CD8-positive, alpha-beta memory T cell (primary cell): ENCODE measurements at regions of chr17 and their contacts with region 1.

Region 1: DNA sequence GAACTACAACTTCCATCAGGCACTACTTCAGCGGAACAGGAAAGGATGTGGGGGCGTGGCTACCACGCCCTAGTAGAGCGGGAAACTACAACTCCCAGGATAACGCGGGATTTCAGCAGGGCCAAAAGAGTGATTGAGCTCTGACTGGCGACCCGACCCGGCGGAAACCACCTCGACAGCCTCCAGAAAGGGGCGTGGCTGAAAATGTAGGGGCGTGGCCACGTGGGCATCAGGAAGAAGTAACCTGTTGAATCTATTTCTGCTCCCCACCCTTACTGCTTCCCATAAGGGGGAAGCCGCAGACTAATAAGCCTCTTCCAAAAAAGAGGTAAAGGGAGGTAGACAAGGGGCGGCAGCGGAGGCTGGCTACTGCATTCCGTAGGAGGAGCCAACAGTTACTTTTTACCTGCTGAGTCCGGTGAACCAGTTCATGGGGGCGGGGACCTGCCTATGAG is at the start of gene TMEM102:
- DNase-seq: peak; percentile 96 to 99 (median 98)
- H3K4me3 ChIP-seq: peak within 1 kb of the TSS; percentile 92
- H3K4me3 Mint-ChIP-seq: peak within 1 kb of the TSS; percentile 88 to 98 (median 96)
- H3K27ac ChIP-seq: peak within 1 kb of the TSS; percentile 77
- H3K27ac Mint-ChIP-seq: peak within 1 kb of the TSS; percentile 93 to 99 (median 97)
- H3K4me1 ChIP-seq: peaks cover 44% of the 10 kb centered on the region
- H3K4me1 Mint-ChIP-seq: peaks cover 30 to 48% (median 42%) of the 10 kb centered on the region in 3 donors
- H3K27me3 ChIP-seq: peaks cover 17% of the 10 kb centered on the region
- H3K27me3 Mint-ChIP-seq: peaks cover 14 to 18% of the 10 kb centered on the region in 2 donors
- total RNA-seq, gene TMEM102: 11.1 to 11.9 TPM

Region 2: DNA sequence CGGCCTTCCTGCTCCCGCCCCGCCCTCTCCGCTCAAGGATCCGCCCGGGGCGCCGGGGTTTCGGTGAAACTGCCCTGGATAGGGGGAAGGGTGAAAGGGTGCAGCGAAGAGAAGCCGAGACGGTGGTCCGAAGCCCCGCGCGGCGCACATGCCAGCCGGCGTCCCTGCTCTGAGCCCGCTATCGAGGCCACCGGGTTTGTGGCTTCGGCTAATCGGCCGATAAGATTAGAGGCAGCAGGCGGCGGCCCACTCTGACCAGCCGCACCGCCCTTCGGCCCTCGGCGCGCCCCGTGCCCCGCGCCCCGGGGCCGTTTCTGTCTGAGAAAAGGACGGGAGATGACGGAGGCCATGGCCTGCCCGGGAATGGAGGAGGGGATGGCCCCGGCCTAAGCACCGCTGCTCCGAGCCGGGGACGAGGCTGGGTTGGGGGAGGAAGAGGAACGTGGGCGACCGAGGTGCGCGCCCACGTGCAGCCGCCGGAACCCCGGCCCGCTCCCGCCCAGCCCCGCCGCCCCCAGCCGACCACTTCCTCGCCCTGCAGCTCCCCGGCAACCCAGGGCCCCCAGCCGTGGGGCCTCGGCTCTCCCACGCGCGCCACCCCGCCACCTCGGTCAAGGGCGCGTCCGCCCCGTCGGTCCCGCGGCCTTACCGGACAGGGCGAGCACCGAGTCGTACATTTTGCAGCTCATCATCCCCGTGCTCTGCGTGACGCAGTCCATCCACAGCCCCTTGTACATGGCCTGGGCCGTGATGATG is 173.9 kb before region 1 on chr17:
- CTCF ChIA-PET with region 1: no interaction called
- POLR2A ChIA-PET with region 1: no interaction called
- DNase-seq: peak in 3 of 5 donors; percentile 25 to 50 (median 33)
- H3K4me3 ChIP-seq: peak overlapping the region; percentile 26
- H3K4me3 Mint-ChIP-seq: peak overlapping the region; percentile 72 to 83 (median 76)
- H3K27ac ChIP-seq: no peak overlapping the region
- H3K27ac Mint-ChIP-seq: peak overlapping the region in 6 of 8 donors; percentile 51 to 85 (median 74)
- H3K4me1 ChIP-seq: peaks cover 19% of the 10 kb centered on the region
- H3K4me1 Mint-ChIP-seq: peaks cover 22 to 32% (median 23%) of the 10 kb centered on the region in 3 donors
- H3K27me3 ChIP-seq: no peaks in the 10 kb centered on the region
- H3K27me3 Mint-ChIP-seq: peaks cover 4 to 6% of the 10 kb centered on the region in 2 donors

Region 3: DNA sequence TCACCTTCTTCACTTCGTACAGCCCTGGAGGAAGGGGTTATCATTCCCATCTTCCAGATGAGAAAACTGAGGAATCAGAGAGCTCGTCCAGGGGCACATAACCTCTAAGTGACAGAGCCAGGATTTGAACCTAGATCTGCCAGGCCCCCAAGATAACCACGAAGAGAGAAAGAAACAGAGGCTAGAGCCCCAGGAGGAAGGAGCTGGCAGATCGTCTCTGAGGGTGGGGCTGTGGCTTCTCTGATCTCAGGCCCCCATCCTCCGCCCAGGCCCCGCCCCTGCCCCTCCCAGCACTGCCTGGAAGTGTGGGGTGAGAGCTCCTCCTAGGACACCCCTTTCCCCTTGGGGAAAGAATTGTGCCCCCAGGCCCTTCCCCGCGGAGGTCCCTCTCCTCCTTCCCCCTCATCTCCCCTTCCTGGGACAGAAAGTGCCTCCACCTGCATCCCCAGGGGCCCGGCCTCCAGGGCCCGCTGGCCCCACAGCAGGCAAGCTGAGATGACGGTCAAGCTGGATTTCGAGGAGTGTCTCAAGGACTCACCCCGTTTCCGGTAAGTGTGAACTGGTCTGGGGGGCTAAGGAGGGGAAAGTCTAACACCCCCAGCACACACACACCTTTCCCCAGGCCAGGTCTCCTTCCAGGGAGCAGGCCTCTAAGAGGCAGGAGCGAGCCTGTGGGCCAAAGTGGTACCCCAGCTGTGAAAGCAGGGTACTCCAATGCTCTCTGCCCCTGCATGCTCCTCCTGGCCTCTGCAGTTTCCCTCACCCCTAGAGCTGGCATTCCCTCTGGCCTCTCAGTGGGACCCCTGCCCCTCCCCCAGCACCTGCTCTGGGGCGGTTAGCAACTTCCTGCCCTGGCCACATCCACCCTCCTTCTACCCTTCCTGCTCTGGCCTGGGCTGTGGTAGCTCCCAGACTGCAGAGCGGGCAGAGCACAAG is 98.7 kb before region 1 on chr17 and contains the start of gene ACAP1:
- CTCF ChIA-PET with region 1: interaction called, 18 read pairs
- POLR2A ChIA-PET with region 1: interaction called, 4 read pairs
- DNase-seq: peak; percentile 78 to 90 (median 81)
- H3K4me3 ChIP-seq: peak within 1 kb of the TSS; percentile 99
- H3K4me3 Mint-ChIP-seq: peak within 1 kb of the TSS; percentile 88 to 98 (median 93)
- H3K27ac ChIP-seq: peak within 1 kb of the TSS; percentile 74
- H3K27ac Mint-ChIP-seq: peak within 1 kb of the TSS; percentile 89 to 98 (median 97)
- H3K4me1 ChIP-seq: peaks cover 69% of the 10 kb centered on the region
- H3K4me1 Mint-ChIP-seq: peaks cover 47 to 68% (median 66%) of the 10 kb centered on the region in 3 donors
- H3K27me3 ChIP-seq: no peaks in the 10 kb centered on the region
- H3K27me3 Mint-ChIP-seq: no peaks in the 10 kb centered on the region
- total RNA-seq, gene ACAP1: 216 to 225 TPM

Region 4: DNA sequence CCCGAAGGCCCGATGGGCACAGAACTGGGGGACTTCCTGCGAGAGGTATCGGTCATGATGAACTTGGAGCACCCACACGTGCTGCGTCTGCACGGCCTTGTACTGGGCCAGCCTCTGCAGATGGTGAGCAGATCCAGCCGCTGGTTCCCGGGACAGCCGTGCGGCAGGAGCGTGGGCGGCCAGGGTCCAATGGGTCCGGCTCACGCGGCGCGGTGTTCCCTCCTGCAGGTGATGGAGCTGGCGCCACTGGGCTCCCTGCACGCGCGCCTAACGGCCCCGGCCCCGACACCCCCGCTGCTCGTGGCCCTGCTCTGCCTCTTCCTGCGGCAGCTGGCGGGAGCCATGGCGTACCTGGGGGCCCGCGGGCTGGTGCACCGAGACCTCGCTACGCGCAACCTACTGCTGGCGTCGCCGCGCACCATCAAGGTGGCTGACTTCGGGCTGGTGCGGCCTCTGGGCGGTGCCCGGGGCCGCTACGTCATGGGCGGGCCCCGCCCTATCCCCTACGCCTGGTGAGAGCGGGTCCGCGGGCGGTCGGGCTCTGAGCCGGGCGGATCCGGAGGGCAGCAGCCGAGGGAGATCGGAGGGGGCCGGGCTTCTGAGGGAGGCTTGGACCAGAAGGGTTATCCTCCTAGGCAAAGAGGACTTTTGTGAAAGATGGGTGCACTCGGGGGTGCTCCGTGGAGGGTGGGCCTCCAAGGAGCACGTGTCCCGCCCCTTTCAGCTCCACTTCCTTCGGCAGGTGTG is 51.3 kb before region 1 on chr17:
- CTCF ChIA-PET with region 1: interaction called, 15 read pairs
- POLR2A ChIA-PET with region 1: interaction called, 6 read pairs
- DNase-seq: peak; percentile 72 to 88 (median 80)
- H3K4me3 ChIP-seq: peak overlapping the region; percentile 83
- H3K4me3 Mint-ChIP-seq: peak overlapping the region; percentile 78 to 92 (median 87)
- H3K27ac ChIP-seq: peak overlapping the region; percentile 79
- H3K27ac Mint-ChIP-seq: peak overlapping the region; percentile 85 to 97 (median 92)
- H3K4me1 ChIP-seq: peaks cover 13% of the 10 kb centered on the region
- H3K4me1 Mint-ChIP-seq: peaks cover 12 to 16% (median 15%) of the 10 kb centered on the region in 3 donors
- H3K27me3 ChIP-seq: peaks cover 16% of the 10 kb centered on the region
- H3K27me3 Mint-ChIP-seq: peaks cover 18 to 33% of the 10 kb centered on the region in 2 donors

Region 5: GRCh38 chr17:7454980-7455379 is 19.7 kb after region 1 on chr17:
- CTCF ChIA-PET with region 1: interaction called, 55 read pairs
- POLR2A ChIA-PET with region 1: interaction called, 10 read pairs
- DNase-seq: no peak
- H3K4me3 ChIP-seq: peak overlapping the region; percentile 95
- H3K4me3 Mint-ChIP-seq: peak overlapping the region; percentile 86 to 100 (median 98)
- H3K27ac ChIP-seq: peak overlapping the region; percentile 72
- H3K27ac Mint-ChIP-seq: peak overlapping the region; percentile 50 to 99 (median 95)
- H3K4me1 ChIP-seq: peaks cover 15% of the 10 kb centered on the region
- H3K4me1 Mint-ChIP-seq: peaks cover 18 to 23% (median 22%) of the 10 kb centered on the region in 3 donors
- H3K27me3 ChIP-seq: no peaks in the 10 kb centered on the region
- H3K27me3 Mint-ChIP-seq: no peaks in the 10 kb centered on the region

Region 6: DNA sequence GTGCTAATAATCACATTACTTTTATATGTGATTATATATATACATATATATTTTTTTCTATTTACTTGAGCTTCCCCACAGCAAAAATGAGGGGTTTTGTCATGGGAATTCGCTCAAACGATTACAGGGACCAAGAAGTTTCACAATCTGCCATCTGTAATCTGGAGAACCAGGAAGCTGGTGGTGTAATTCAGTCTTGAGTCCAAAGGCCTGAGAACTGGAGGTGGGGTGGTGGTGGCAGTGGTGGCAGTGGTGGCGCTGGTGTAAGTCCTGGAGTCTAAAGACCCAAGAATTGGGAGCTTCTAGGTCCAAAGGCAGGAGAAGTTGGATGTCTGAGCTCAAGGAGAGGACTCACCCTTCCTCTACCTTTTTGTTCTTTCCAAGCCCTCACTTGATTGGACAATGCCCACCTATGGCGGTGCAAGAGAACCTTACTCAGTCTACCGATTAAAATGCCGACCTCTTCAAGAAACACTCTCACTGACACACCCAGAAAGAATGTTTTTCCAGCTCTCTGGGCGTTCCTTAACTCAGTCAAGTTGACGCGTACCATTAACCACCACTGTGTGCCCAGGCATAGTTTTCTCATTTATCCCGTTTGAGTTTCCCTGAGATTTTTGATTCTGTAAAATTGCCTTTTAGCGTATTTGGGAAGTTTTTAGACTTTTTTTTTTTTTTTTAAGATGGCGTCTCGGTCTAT is 80.8 kb after region 1 on chr17:
- CTCF ChIA-PET with region 1: interaction called, 34 read pairs
- POLR2A ChIA-PET with region 1: no interaction called
- DNase-seq: no peak
- H3K4me3 ChIP-seq: no peak overlapping the region
- H3K4me3 Mint-ChIP-seq: no peak overlapping the region
- H3K27ac ChIP-seq: no peak overlapping the region
- H3K27ac Mint-ChIP-seq: peak overlapping the region in 4 of 8 donors; percentile 29 to 79 (median 63)
- H3K4me1 ChIP-seq: no peaks in the 10 kb centered on the region
- H3K4me1 Mint-ChIP-seq: no peaks in the 10 kb centered on the region
- H3K27me3 ChIP-seq: no peaks in the 10 kb centered on the region
- H3K27me3 Mint-ChIP-seq: no peaks in the 10 kb centered on the region

Region 7: DNA sequence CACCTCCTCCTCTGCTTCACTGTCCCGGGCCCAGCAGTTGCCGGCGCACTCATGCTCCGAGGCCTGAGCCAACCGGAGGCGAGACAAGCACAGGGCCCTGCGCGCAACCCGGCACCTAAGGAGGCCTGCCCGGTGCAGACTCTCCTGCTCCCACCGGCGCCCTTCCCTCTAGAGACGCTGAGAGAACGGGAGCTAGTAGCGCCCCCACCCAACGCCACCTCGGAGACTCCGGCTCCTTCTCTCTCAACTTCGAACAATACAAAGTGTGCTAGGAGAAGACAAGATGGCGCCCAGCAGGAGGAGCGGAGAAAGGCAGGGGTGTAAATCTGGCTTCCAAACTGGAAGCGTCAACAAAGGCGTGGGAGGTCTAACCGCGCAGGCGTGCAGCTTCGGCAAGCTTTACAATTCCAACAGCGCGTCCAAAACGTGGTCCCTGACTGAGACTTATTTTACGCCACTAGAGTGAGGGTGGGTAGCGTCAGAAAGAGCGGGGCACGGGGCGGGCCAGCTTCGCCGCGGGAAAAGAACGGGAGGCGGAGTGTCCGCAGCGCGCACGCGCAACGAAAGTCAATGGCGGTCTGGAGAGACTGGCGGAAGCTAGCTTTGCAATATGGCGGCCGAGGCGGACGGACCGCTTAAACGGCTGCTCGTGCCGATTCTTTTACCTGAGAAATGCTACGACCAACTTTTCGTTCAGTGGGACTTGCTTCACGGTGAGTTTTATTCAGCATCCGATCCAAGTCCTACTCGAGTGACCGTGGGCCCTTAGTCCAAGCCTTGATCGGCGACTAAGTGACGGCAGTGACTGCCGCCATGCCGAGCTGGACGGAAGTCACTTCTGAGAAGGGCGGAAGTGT is 148.2 kb after region 1 on chr17 and contains the start of gene MPDU1:
- CTCF ChIA-PET with region 1: interaction called, 14 read pairs
- POLR2A ChIA-PET with region 1: interaction called, 16 read pairs
- DNase-seq: peak; percentile 90 to 97 (median 96)
- H3K4me3 ChIP-seq: peak within 1 kb of the TSS; percentile 98
- H3K4me3 Mint-ChIP-seq: peak within 1 kb of the TSS; percentile 99 to 100 (median 99)
- H3K27ac ChIP-seq: peak within 1 kb of the TSS; percentile 98
- H3K27ac Mint-ChIP-seq: peak within 1 kb of the TSS; percentile 99 to 100 (median 100)
- H3K4me1 ChIP-seq: peaks cover 40% of the 10 kb centered on the region
- H3K4me1 Mint-ChIP-seq: peaks cover 50 to 60% (median 52%) of the 10 kb centered on the region in 3 donors
- H3K27me3 ChIP-seq: no peaks in the 10 kb centered on the region
- H3K27me3 Mint-ChIP-seq: peaks cover 0 to 4% of the 10 kb centered on the region in 2 donors
- total RNA-seq, gene MPDU1: 115 to 124 TPM